ENCODE measurements at regions of chr3 and their contacts with region 1.

Region 1: GRCh38 chr3:42539869-42540714 is 37.6 kb downstream of the VIPR1 start:
- DNase-seq: peak; percentile 73
- ATAC-seq: peak; percentile 72
- H3K4me3 Mint-ChIP-seq: no peak overlapping the region
- H3K27ac Mint-ChIP-seq: no peak overlapping the region
- H3K4me1 Mint-ChIP-seq: no peaks in the 10 kb centered on the region
- H3K27me3 Mint-ChIP-seq: no peaks in the 10 kb centered on the region

Region 2: GRCh38 chr3:42502429-42503250 is 37.5 kb before region 1 on chr3 and contains the start of gene VIPR1:
- CTCF ChIA-PET with region 1: interaction called, 42 read pairs
- DNase-seq: peak; percentile 87
- ATAC-seq: peak; percentile 95
- H3K4me3 Mint-ChIP-seq: peak within 1 kb of the TSS; percentile 81
- H3K27ac Mint-ChIP-seq: no peak within 1 kb of the TSS
- H3K4me1 Mint-ChIP-seq: peaks cover 33% of the 10 kb centered on the region
- H3K27me3 Mint-ChIP-seq: peaks cover 44% of the 10 kb centered on the region
- total RNA-seq, gene VIPR1: 0.14 to 1.9 TPM

Region 3: GRCh38 chr3:42518800-42519567 is 21.1 kb before region 1 on chr3:
- CTCF ChIA-PET with region 1: interaction called, 12 read pairs
- DNase-seq: peak; percentile 62
- ATAC-seq: peak; percentile 46
- H3K4me3 Mint-ChIP-seq: no peak overlapping the region
- H3K27ac Mint-ChIP-seq: no peak overlapping the region
- H3K4me1 Mint-ChIP-seq: peaks cover 10% of the 10 kb centered on the region
- H3K27me3 Mint-ChIP-seq: no peaks in the 10 kb centered on the region

Region 4: GRCh38 chr3:42526616-42527367 is 13.3 kb before region 1 on chr3:
- CTCF ChIA-PET with region 1: interaction called, 14 read pairs
- DNase-seq: peak; percentile 54
- ATAC-seq: peak; percentile 67
- H3K4me3 Mint-ChIP-seq: no peak overlapping the region
- H3K27ac Mint-ChIP-seq: peak overlapping the region; percentile 18
- H3K4me1 Mint-ChIP-seq: peaks cover 27% of the 10 kb centered on the region
- H3K27me3 Mint-ChIP-seq: no peaks in the 10 kb centered on the region

Region 5: GRCh38 chr3:42562047-42562907 is 22.2 kb after region 1 on chr3:
- CTCF ChIA-PET with region 1: no interaction called
- DNase-seq: no peak
- ATAC-seq: no peak
- H3K4me3 Mint-ChIP-seq: no peak overlapping the region
- H3K27ac Mint-ChIP-seq: peak overlapping the region; percentile 20
- H3K4me1 Mint-ChIP-seq: peaks cover 6% of the 10 kb centered on the region
- H3K27me3 Mint-ChIP-seq: no peaks in the 10 kb centered on the region

Region 6: DNA sequence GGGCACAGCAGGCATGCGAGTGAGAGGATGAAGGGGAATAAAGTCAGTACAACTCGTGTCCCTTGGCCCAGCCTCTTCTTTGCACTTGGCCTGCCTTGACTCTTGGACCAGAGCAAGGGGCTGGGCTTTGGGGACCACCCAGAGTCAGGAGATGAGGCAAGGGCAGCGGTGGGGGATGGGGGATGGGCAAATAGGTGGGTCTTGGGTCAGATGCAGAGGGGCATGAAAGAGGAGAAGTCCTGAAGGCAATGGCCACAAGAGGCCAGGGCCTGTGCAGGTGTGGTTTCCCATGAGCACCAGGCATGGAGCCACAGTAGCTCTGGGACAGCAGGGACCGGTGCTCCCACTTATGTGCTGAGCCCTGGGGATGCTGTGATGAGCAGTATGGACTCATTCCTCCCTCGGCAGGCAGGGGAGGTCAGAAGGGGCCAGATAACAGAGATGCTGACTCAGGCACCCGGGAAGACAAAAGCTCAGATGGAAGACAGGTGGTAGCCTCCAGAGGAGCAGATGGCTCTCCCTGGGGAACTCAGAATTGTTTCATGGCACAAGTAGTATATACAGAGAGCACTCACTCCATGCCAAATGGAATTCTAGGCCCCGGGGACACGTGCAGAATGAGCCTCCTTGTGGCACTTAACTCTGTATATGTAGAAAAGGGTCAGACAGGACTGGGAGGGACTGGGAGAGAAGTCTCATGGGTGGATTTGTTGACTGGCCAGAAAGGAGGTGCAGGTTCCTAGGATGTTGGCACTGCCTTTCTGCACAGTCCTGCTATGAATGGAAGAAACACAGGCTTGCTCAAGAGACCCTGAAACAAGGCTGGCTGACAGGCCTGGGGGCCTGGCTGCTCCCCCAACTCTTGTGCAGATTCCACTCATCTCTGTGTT is 127.7 kb after region 1 on chr3:
- CTCF ChIA-PET with region 1: no interaction called
- DNase-seq: peak; percentile 35
- ATAC-seq: no peak
- H3K4me3 Mint-ChIP-seq: no peak overlapping the region
- H3K27ac Mint-ChIP-seq: no peak overlapping the region
- H3K4me1 Mint-ChIP-seq: no peaks in the 10 kb centered on the region
- H3K27me3 Mint-ChIP-seq: no peaks in the 10 kb centered on the region

Measured in activated CD8-positive, alpha-beta memory T cell treated with anti-CD3 and anti-CD28 coated beads, Interleukin-2, amount 10 ng/mL, durations not matched to agents 7 days and 5 days (primary cell).